WTC11 (cell line): ENCODE measurements at regions of chr18 and their contacts with region 1.

Region 1: DNA sequence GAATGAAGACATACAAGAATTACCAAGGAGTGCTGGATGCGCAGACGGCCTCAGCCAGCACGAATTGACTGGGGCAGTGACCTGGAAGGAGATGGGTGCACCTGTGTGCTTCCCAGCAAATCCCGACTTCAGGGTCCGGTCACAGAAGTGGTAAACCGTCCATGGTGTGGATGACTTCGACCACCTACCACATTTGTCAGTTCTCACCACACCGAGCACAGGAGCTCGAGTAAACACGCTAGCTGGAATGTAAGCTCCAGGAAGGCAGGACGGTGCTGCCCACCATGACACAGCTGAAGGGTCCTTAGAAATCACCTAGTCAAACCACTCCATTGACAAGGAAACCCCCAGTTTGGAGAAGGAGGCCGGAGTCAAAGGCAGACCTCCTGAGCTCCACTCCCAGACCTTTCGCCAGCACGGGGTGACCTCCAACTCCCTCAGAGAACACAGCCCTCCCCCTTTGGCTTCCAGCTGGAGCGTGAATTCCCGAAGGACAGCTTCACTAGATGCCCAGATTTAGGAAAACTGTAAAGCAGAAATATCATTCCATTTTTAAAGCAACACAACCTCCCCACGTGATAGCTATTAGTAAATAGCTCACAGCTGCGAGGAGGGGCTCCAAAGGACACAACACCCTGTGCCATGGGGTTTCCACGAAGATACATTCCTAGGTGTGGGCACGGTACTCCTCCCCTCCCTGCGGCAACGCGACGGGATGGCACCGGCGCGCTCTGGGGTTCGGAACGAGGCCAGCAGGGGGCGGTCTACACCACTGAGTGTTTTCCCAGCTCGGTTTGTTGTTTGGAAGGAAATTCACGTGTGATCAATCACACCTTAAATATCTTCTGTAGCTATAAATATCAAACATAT is 34.1 kb upstream of the GNAL start:
- DNase-seq: peak; percentile 84
- ATAC-seq: peak; percentile 89
- H3K4me3 Mint-ChIP-seq: peak overlapping the region; percentile 50
- H3K27ac Mint-ChIP-seq: no peak overlapping the region
- H3K4me1 Mint-ChIP-seq: peaks cover 6% of the 10 kb centered on the region
- H3K27me3 Mint-ChIP-seq: peaks cover 21% of the 10 kb centered on the region
- CTCF ChIP-seq: peak; percentile 89

Region 2: DNA sequence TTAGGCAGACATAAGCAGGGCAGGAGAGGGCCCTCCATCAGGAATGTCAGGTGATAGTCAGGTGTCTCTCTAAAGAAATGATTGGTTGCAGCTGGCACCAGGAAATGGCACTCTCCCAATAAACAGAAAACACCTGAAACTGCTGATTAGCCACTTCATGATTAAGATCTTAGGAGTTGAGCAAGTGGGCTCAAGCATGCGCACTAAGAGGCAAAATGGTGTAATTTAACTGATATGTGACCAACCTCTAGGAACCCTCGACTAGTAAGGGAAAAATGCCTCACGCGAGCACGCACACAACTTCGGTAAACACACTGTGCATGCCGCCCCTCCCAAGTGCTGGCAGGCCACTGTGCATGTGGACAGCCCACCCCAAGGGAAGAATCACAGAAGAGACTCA is 69.4 kb before region 1 on chr18:
- CTCF ChIA-PET with region 1: no interaction called
- POLR2A ChIA-PET with region 1: no interaction called
- DNase-seq: no peak
- ATAC-seq: no peak
- H3K4me3 Mint-ChIP-seq: no peak overlapping the region
- H3K27ac Mint-ChIP-seq: no peak overlapping the region
- H3K4me1 Mint-ChIP-seq: peaks cover 5% of the 10 kb centered on the region
- H3K27me3 Mint-ChIP-seq: no peaks in the 10 kb centered on the region
- CTCF ChIP-seq: no peak

Region 3: GRCh38 chr18:11669271-11669947 is 14.4 kb after region 1 on chr18:
- CTCF ChIA-PET with region 1: interaction called, 19 read pairs
- POLR2A ChIA-PET with region 1: no interaction called
- DNase-seq: no peak
- ATAC-seq: no peak; the same call in 1 of the 2 replicates
- H3K4me3 Mint-ChIP-seq: no peak overlapping the region
- H3K27ac Mint-ChIP-seq: no peak overlapping the region
- H3K4me1 Mint-ChIP-seq: peaks cover 37% of the 10 kb centered on the region
- H3K27me3 Mint-ChIP-seq: peaks cover 8% of the 10 kb centered on the region
- CTCF ChIP-seq: no peak

Region 4: GRCh38 chr18:11688989-11689668 is 34.2 kb after region 1 on chr18 and contains the start of gene GNAL:
- CTCF ChIA-PET with region 1: interaction called, 12 read pairs
- POLR2A ChIA-PET with region 1: no interaction called
- DNase-seq: peak; percentile 89
- ATAC-seq: peak; percentile 91
- H3K4me3 Mint-ChIP-seq: peak within 1 kb of the TSS; percentile 74
- H3K27ac Mint-ChIP-seq: no peak within 1 kb of the TSS
- H3K4me1 Mint-ChIP-seq: peaks cover 6% of the 10 kb centered on the region
- H3K27me3 Mint-ChIP-seq: peaks cover 22% of the 10 kb centered on the region
- CTCF ChIP-seq: no peak
- total RNA-seq, gene GNAL: 22.3 to 26.7 TPM (median 23.9 TPM) in 3 replicates

Region 5: GRCh38 chr18:11714244-11714918 is 59.4 kb after region 1 on chr18:
- CTCF ChIA-PET with region 1: interaction called, 10 read pairs
- POLR2A ChIA-PET with region 1: no interaction called
- DNase-seq: no peak
- ATAC-seq: peak; percentile 90
- H3K4me3 Mint-ChIP-seq: peak overlapping the region; percentile 18
- H3K27ac Mint-ChIP-seq: peak overlapping the region; percentile 95
- H3K4me1 Mint-ChIP-seq: peaks cover 39% of the 10 kb centered on the region
- H3K27me3 Mint-ChIP-seq: peaks cover 5% of the 10 kb centered on the region
- CTCF ChIP-seq: no peak

Region 6: GRCh38 chr18:11726556-11726955 is 71.6 kb after region 1 on chr18:
- CTCF ChIA-PET with region 1: interaction called, 99 read pairs
- POLR2A ChIA-PET with region 1: no interaction called
- DNase-seq: no peak
- ATAC-seq: no peak
- H3K4me3 Mint-ChIP-seq: no peak overlapping the region
- H3K27ac Mint-ChIP-seq: no peak overlapping the region
- H3K4me1 Mint-ChIP-seq: peaks cover 18% of the 10 kb centered on the region
- H3K27me3 Mint-ChIP-seq: no peaks in the 10 kb centered on the region
- CTCF ChIP-seq: no peak